ENCODE measurements at regions of chr12 and their contacts with region 1.

Region 1: DNA sequence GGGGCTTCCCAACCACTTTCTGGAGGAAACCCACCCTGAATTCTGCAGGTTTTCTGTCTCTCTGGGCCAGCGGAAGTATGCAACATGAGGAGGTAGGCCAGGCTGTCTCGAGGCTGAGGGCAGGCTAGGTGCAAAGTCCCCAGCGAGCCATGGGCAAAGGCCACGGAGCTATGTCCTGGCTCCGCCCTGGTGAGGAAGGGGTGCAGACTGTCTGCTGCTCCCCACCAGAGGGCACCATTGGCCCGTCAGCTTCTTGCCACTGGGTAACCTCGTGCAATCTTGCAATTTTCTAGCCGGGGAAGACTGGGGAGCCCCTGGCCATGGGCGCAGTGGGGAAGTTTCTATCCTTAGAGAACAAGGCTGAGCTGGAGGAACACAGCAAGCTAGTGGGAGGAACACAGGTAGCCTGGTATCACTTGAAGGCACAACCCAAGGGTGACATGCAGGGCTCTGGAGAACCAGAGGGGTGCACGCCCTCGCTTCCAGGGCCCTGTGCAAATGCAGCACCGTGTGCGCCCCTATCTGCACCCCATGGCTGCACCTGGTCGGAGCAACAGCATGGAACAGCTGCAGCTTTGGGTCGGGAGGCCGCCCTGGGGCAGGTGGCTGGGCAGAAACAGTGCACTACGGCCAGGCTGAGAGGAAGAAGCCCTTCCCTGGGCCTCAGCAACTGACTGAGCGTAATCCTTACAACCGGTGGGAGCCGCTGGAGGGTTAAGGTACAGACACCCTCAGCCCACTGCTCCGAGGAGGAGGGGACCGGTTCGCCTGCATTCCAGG is 27.6 kb upstream of the RPLP0 start:
- DNase-seq: peak; percentile 89
- ATAC-seq: peak; percentile 5
- H3K4me3 ChIP-seq: peak overlapping the region; percentile 60
- H3K27ac ChIP-seq: peak overlapping the region; percentile 99
- H3K4me1 ChIP-seq: peaks cover 60% of the 10 kb centered on the region
- H3K27me3 ChIP-seq: no peaks in the 10 kb centered on the region
- CTCF ChIP-seq: peak; percentile 96

Region 2: GRCh38 chr12:120257041-120257821 is 28.8 kb after region 1 on chr12:
- CTCF ChIA-PET with region 1: interaction called, 142 read pairs
- POLR2A ChIA-PET with region 1: interaction called, 40 read pairs
- intact Hi-C with region 1: loop called (anchors 1 kb)
- DNase-seq: peak; percentile 89
- ATAC-seq: peak; percentile 68
- H3K4me3 ChIP-seq: peak overlapping the region; percentile 46
- H3K27ac ChIP-seq: peak overlapping the region; percentile 77
- H3K4me1 ChIP-seq: peaks cover 64% of the 10 kb centered on the region
- H3K27me3 ChIP-seq: no peaks in the 10 kb centered on the region
- CTCF ChIP-seq: 0 out of 2 replicates have a peak, but pooled peaks have one; percentile 28

Region 3: DNA sequence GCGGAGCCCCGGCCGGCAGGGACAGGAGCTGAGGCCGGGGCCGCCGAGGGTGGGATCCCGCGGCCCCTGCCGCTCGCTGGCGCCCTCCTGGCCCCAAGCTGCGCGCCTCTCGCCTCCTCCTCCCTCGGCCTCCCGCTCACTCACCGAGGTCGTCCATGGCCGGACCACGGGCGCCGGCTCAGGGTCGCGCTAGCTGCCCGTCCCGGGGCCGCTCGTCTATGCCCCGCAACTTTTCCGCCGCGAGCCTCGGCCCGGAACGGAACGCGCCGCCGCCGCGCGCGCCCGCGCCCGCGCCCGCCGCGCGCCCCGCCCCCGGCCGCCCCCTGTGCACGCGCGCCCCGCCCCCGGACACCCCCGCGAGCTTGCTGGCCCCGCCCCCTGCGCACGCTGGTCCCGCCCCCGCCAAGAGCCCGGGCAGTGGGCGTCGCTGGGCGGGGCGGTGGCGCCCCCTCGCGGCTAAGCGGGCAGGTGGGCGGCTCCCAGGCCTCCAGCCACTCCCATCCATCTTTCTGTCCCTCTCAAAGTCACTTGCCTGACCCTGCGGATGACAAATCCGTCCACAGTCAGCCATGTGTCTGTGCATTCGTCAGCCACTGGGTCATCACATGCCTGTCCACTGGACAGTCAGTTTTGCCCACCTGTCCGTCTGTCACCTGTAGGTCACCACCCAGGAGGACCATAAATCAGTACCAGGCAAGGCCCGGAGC is 37.1 kb after region 1 on chr12 and contains the start of gene PXN:
- CTCF ChIA-PET with region 1: interaction called, 142 read pairs
- POLR2A ChIA-PET with region 1: interaction called, 52 read pairs
- intact Hi-C with region 1: loop called (anchors 1 kb)
- DNase-seq: peak; percentile 89
- ATAC-seq: peak; percentile 41
- H3K4me3 ChIP-seq: peak within 1 kb of the TSS; percentile 91
- H3K27ac ChIP-seq: peak within 1 kb of the TSS; percentile 91
- H3K4me1 ChIP-seq: peaks cover 28% of the 10 kb centered on the region
- H3K27me3 ChIP-seq: no peaks in the 10 kb centered on the region
- CTCF ChIP-seq: peak; percentile 83
- total RNA-seq, gene PXN: 313 and 413 TPM in 2 replicates